T-cell (primary cell): ENCODE measurements at regions of chr21 and their contacts with region 1.

Region 1: GRCh38 chr21:41979751-41980369 is 26.0 kb upstream of the C2CD2 start:
- DNase-seq: peak in 1 of 35 experiments; percentile 4
- ATAC-seq: no peak
- H3K4me3 ChIP-seq: no peak overlapping the region
- H3K4me3 Mint-ChIP-seq: no peak overlapping the region
- H3K27ac ChIP-seq: no peak overlapping the region
- H3K27ac Mint-ChIP-seq: no peak overlapping the region
- H3K4me1 ChIP-seq: peaks cover 0 to under 1% of the 10 kb centered on the region in 2 experiments
- H3K4me1 Mint-ChIP-seq: peaks cover 3 to 5% (median 3%) of the 10 kb centered on the region in 3 donors
- H3K27me3 ChIP-seq: peaks cover 0 to 7% of the 10 kb centered on the region in 2 experiments
- H3K27me3 Mint-ChIP-seq: peaks cover 0 to 7% of the 10 kb centered on the region in 2 donors

Region 2: GRCh38 chr21:41993744-41994143 is 13.9 kb after region 1 on chr21:
- CTCF ChIA-PET with region 1: no interaction called
- POLR2A ChIA-PET with region 1: no interaction called
- DNase-seq: no peak
- ATAC-seq: no peak
- H3K4me3 ChIP-seq: no peak overlapping the region
- H3K4me3 Mint-ChIP-seq: no peak overlapping the region
- H3K27ac ChIP-seq: no peak overlapping the region
- H3K27ac Mint-ChIP-seq: no peak overlapping the region
- H3K4me1 ChIP-seq: no peaks in the 10 kb centered on the region
- H3K4me1 Mint-ChIP-seq: peaks cover 0 to 3% (median 0%) of the 10 kb centered on the region in 3 donors
- H3K27me3 ChIP-seq: no peaks in the 10 kb centered on the region
- H3K27me3 Mint-ChIP-seq: no peaks in the 10 kb centered on the region

Region 3: DNA sequence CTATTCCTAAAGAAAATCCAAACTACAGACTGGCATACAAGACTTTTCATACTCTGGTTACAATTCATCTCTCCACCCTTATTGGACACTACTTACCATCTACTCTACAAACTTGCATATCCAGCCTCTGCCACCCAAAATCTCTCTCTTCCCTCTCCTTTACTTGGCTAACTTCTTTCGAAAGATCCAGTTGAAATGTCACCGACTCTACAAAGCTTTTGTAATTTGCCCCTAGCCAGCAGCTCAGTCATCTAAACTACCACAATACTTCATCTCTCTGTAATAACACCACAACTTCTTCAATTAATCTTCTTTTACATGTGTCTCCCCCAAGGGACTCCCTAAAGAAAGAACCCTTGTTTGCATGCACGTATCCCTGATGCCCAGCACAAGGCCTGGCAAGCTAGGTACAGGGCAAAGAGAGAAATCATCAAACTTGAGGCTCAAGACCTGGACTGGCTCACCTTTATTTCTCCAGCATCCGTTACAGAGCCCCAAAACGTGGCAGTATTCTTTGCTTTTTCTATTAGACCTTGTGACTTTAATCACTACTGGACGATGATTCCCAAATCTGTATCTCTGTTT is 27.6 kb after region 1 on chr21:
- CTCF ChIA-PET with region 1: no interaction called
- POLR2A ChIA-PET with region 1: interaction called in 1 of 2 experiments, 14 read pairs
- DNase-seq: no peak
- ATAC-seq: no peak
- H3K4me3 ChIP-seq: no peak overlapping the region
- H3K4me3 Mint-ChIP-seq: peak overlapping the region in 2 of 3 donors; percentile 11 to 22
- H3K27ac ChIP-seq: no peak overlapping the region
- H3K27ac Mint-ChIP-seq: no peak overlapping the region
- H3K4me1 ChIP-seq: peaks cover 11 to 23% of the 10 kb centered on the region in 2 experiments
- H3K4me1 Mint-ChIP-seq: peaks cover 41 to 47% (median 45%) of the 10 kb centered on the region in 3 donors
- H3K27me3 ChIP-seq: no peaks in the 10 kb centered on the region
- H3K27me3 Mint-ChIP-seq: no peaks in the 10 kb centered on the region